ENCODE measurements at regions of chr11 and their contacts with region 1.

Region 1: DNA sequence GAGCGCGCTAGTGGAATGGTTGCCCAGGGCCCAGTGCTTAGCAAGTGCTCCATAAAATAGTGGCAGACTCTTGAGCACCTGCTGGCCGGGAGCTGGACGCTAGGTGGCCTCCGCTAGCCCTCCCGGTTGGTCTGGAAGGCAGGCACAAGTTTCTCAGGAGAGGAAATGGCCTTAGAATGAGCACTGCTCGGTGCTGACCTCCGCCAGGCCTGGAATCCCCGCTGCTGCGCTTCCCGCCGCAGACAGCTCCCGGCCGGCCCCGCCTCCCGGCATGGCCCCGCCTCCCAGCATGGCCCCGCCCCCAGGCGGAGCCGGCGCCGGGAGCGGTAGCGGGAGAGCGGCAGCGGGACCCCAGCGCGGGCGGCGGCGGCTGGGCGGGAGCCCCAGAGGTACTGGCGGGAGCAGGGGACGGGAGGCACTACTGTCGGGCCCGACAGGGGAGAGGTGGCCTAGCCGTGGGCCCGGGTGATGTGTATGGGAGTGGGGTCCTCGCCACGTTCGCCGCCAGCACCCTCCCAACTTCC is at the start of gene SIPA1:
- DNase-seq: peak; percentile 83 to 85
- ATAC-seq: peak; percentile 79 to 87 (median 82)
- H3K4me3 ChIP-seq: peak within 1 kb of the TSS; percentile 74 to 90 (median 82)
- H3K27ac ChIP-seq: peak within 1 kb of the TSS; percentile 94 to 99 (median 96)
- H3K4me1 ChIP-seq: peaks cover 21 to 56% (median 50%) of the 10 kb centered on the region in 9 donors
- H3K27me3 ChIP-seq: no peaks in the 10 kb centered on the region
- CTCF ChIP-seq: peak; percentile 13 to 68 (median 52)
- total RNA-seq, gene SIPA1: 11.8 to 39.7 (median 15.6) TPM

Region 2: DNA sequence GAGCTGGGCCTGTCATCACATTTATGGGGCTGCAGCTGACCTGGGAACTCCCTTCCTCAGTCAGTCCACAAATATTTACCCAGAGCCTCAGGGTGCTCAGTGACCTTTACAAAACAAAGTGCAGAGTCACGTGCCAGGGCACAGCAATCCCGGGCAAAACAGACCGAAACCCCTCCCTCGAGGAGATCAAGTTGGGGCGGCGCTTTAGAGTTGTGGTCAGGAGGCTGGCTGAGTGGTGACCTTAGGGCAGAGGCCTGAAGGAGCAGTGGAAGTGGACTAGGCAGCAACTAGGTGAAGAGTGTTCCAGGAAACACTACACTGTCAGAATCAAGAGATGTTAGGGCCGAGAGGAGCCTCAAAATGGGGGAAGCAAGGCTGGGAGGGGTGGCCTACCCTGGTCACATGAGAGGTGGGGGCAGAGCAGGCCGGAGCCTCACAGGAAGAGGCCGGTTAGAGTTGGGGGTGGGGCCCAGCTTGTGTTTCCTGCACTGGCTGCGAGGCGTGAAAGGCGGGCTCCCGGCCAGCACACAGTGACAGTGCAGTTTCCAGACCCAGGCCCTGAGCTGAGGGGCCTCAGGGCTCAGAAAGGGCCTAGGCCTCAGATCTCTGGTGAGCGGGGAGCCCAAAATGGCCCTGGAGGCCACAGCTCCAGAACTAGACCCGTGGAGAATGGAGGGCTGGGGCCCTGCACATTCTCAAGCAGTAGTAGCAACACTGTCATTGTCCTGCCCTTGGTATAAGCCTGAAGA is 219.0 kb before region 1 on chr11:
- intact Hi-C with region 1: no loop called
- DNase-seq: peak; percentile 97 to 99
- ATAC-seq: peak; percentile 44 to 66 (median 57)
- H3K4me3 ChIP-seq: peak overlapping the region; percentile 12 to 95 (median 74)
- H3K27ac ChIP-seq: peak overlapping the region; percentile 99 to 100 (median 100)
- H3K4me1 ChIP-seq: peaks cover 38 to 69% (median 66%) of the 10 kb centered on the region in 9 donors
- H3K27me3 ChIP-seq: no peaks in the 10 kb centered on the region
- CTCF ChIP-seq: no peak

Region 3: GRCh38 chr11:65662799-65663638 is 25.2 kb after region 1 on chr11 and contains the start of gene RELA:
- intact Hi-C with region 1: loop called in 1 of 10 experiments (anchors 2 kb)
- DNase-seq: peak; percentile 92 to 97
- ATAC-seq: peak; percentile 88 to 94 (median 90)
- H3K4me3 ChIP-seq: peak within 1 kb of the TSS; percentile 74 to 100 (median 92)
- H3K27ac ChIP-seq: peak within 1 kb of the TSS; percentile 96 to 100 (median 100)
- H3K4me1 ChIP-seq: peaks cover 7 to 42% (median 37%) of the 10 kb centered on the region in 9 donors
- H3K27me3 ChIP-seq: no peaks in the 10 kb centered on the region
- CTCF ChIP-seq: no peak
- total RNA-seq, gene RELA: 30.7 to 55.2 (median 40.0) TPM

Region 4: GRCh38 chr11:65791691-65792213 is 153.9 kb after region 1 on chr11:
- intact Hi-C with region 1: no loop called
- DNase-seq: no peak
- ATAC-seq: peak in 1 of 8 donors; percentile 15
- H3K4me3 ChIP-seq: no peak overlapping the region
- H3K27ac ChIP-seq: peak overlapping the region in 1 of 10 donors; percentile 36
- H3K4me1 ChIP-seq: peaks cover 3 to 26% (median 13%) of the 10 kb centered on the region in 9 donors
- H3K27me3 ChIP-seq: peaks cover 14 to 65% (median 48%) of the 10 kb centered on the region in 7 donors
- CTCF ChIP-seq: no peak

Region 5: GRCh38 chr11:65833297-65834030 is 195.6 kb after region 1 on chr11 and contains the start of gene SNX32:
- intact Hi-C with region 1: loop called in 1 of 10 experiments (anchors 10 kb)
- DNase-seq: peak; percentile 95 to 96
- ATAC-seq: peak; percentile 99 to 100 (median 100)
- H3K4me3 ChIP-seq: peak within 1 kb of the TSS; percentile 40 to 70 (median 58)
- H3K27ac ChIP-seq: peak within 1 kb of the TSS in 3 of 10 donors; percentile 26 to 75 (median 52)
- H3K4me1 ChIP-seq: peaks cover 0 to 18% (median 6%) of the 10 kb centered on the region in 9 donors
- H3K27me3 ChIP-seq: peaks cover 0 to 10% (median 0%) of the 10 kb centered on the region in 7 donors
- CTCF ChIP-seq: no peak
- total RNA-seq, gene SNX32: 0.13 to 0.32 (median 0.21) TPM in 5 of 10 donors, not detected in the others

Measured in heart right ventricle (tissue), 16 donors.